ENCODE measurements at regions of chr3 and their contacts with region 1.

Region 1: GRCh38 chr3:143167969-143168854 is 48.6 kb downstream of the CHST2 start:
- DNase-seq: no peak
- H3K4me3 Mint-ChIP-seq: peak overlapping the region; percentile 38
- H3K27ac Mint-ChIP-seq: peak overlapping the region; percentile 59
- H3K4me1 Mint-ChIP-seq: peaks cover 75% of the 10 kb centered on the region
- H3K27me3 Mint-ChIP-seq: no peaks in the 10 kb centered on the region

Region 2: GRCh38 chr3:143060906-143061305 is 107.3 kb before region 1 on chr3:
- intact Hi-C with region 1: loop called (anchors 2 kb)
- DNase-seq: no peak
- H3K4me3 Mint-ChIP-seq: peak overlapping the region; percentile 40
- H3K27ac Mint-ChIP-seq: peak overlapping the region; percentile 13
- H3K4me1 Mint-ChIP-seq: peaks cover 16% of the 10 kb centered on the region
- H3K27me3 Mint-ChIP-seq: no peaks in the 10 kb centered on the region

Region 3: GRCh38 chr3:143207338-143207961 is 39.2 kb after region 1 on chr3:
- intact Hi-C with region 1: loop called (anchors 5 kb)
- DNase-seq: peak; percentile 66
- H3K4me3 Mint-ChIP-seq: no peak overlapping the region
- H3K27ac Mint-ChIP-seq: peak overlapping the region; percentile 36
- H3K4me1 Mint-ChIP-seq: peaks cover 15% of the 10 kb centered on the region
- H3K27me3 Mint-ChIP-seq: no peaks in the 10 kb centered on the region

Region 4: GRCh38 chr3:143276592-143276991 is 108.4 kb after region 1 on chr3:
- intact Hi-C with region 1: loop called (anchors 2 kb)
- DNase-seq: no peak
- H3K4me3 Mint-ChIP-seq: no peak overlapping the region
- H3K27ac Mint-ChIP-seq: no peak overlapping the region
- H3K4me1 Mint-ChIP-seq: peaks cover 6% of the 10 kb centered on the region
- H3K27me3 Mint-ChIP-seq: no peaks in the 10 kb centered on the region

Region 5: DNA sequence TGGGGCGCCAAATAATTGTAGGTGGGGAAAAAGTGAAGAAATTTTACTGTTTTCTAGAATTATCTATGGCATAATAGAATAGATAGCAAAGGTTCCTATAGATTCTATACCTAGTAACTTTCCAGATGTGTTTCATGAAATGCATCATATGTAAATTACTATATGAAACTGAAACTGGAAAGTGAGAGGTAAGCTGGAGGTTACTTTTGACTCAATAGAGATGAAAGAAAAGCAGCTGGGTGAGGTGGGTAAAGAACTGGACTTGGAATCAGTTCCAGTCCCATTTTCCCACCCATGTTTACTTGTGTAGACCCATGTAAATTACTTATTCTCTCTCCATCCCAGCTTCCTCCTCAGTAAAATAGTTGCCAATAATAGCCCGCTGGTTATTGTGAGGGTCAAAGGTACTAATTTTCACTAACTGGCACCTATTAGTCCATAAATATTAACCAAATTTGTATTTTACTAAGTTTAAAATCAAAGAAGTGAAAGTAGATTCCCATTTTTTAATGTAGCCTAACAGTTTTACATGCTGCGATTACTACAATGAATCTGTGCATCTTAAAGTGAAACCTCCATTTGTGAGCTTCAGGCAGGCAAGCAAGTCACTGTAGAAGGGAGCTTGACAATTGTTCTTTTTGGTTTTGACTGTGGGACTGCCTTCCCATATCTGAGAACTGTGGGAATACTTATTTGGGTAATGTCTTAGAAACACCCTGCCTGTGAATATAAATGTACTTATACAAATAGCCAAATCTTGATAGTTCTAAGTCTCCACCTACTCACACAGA is 368.0 kb after region 1 on chr3:
- intact Hi-C with region 1: loop called (anchors 2 kb)
- DNase-seq: peak; percentile 58
- H3K4me3 Mint-ChIP-seq: no peak overlapping the region
- H3K27ac Mint-ChIP-seq: no peak overlapping the region
- H3K4me1 Mint-ChIP-seq: peaks cover 14% of the 10 kb centered on the region
- H3K27me3 Mint-ChIP-seq: no peaks in the 10 kb centered on the region

Measured in activated CD4-positive, alpha-beta T cell treated with anti-CD3 and anti-CD28 coated beads, Interleukin-2, amount 10 ng/mL, durations not matched to agents 24 days and 14 days (primary cell).